Activated T-helper 1 cell treated with anti-CD3 and anti-CD28 coated beads, Interleukin-12 subunit alpha, Interleukin-12 subunit beta, Interleukin-2, Interleukin-4 antibody, amounts not matched to agents 30 ng/mL and 10 ng/mL and 1 ng/mL, durations not matched to agents 14 hours and 24 hours and 36 hours (primary cell): ENCODE measurements at regions of chr20 and their contacts with region 1.

Region 1: DNA sequence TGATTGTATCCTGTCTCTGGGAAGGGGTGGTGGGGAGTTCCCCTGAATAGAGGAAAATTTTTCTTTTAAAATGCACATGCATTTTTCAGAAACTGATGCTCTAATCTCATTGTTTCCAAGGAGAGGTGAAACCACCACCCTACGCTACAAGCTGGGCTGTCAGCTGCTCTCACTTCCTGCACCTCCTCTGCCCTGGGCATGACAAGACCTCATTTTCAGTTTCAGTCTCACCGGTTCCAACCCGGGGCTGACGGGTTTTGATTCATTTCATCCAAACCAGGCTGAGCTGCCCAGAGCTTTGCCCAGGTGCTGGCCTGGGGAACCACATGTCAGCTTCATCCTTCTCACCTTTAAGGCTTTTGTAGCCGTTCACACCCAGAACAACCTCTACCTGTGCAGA is 99.7 kb downstream of the EYA2 start:
- DNase-seq: peak; percentile 74
- H3K4me3 Mint-ChIP-seq: peak overlapping the region; percentile 64
- H3K27ac Mint-ChIP-seq: peak overlapping the region; percentile 90
- H3K4me1 Mint-ChIP-seq: peaks cover 80% of the 10 kb centered on the region
- H3K27me3 Mint-ChIP-seq: peaks cover 6% of the 10 kb centered on the region

Region 2: DNA sequence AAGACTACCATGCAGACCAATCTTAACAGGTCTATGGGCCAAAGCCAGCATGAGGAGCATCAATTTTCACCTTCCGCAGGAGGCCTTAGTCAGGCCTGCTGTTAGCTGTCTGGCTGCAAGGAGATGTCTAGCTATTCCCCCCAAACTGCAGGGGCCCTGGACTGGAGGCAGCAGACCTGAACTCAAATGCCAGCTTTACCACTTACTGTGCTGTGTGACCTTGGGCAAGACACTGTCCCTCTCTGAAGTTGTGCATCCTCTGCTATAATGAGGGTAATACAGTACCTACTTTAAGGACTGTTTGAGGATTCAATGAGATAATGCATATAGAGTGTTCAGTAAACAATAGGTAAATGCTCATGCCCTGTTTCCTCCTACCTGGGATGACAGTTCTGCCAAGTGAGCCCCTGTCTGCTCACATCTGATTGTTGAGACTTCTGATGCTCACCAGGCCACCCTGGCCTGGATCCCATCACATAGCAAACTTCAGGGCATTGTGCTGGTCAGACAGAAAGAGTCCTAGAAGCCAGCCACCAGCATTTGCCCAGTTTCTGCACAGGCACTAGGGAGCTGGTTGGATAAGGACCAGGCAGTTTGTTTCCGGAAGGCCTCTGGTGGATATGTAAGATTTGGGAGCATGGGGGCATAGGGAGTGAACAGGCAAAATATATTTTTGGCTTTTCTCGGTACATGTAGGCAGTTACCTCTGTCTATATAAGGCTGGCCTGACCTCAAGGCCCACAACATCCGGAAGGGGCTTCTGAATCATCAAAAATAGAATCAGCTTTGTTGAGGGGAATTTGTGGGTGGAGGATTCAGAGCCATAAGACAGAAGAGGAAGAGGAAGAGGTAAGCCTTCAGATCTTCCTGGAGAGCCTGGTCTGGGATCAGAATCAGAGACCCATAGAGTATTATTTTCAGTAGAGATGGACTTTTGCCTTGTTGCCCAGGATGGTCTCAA is 441.6 kb before region 1 on chr20:
- intact Hi-C with region 1: loop called (anchors 5 kb)
- DNase-seq: peak; percentile 61
- H3K4me3 Mint-ChIP-seq: peak overlapping the region; percentile 35
- H3K27ac Mint-ChIP-seq: peak overlapping the region; percentile 91
- H3K4me1 Mint-ChIP-seq: peaks cover 68% of the 10 kb centered on the region
- H3K27me3 Mint-ChIP-seq: no peaks in the 10 kb centered on the region

Region 3: GRCh38 chr20:46970923-46971616 is 23.3 kb before region 1 on chr20:
- intact Hi-C with region 1: loop called (anchors 1 kb)
- DNase-seq: no peak
- H3K4me3 Mint-ChIP-seq: no peak overlapping the region
- H3K27ac Mint-ChIP-seq: no peak overlapping the region
- H3K4me1 Mint-ChIP-seq: peaks cover 17% of the 10 kb centered on the region
- H3K27me3 Mint-ChIP-seq: peaks cover 25% of the 10 kb centered on the region

Region 4: DNA sequence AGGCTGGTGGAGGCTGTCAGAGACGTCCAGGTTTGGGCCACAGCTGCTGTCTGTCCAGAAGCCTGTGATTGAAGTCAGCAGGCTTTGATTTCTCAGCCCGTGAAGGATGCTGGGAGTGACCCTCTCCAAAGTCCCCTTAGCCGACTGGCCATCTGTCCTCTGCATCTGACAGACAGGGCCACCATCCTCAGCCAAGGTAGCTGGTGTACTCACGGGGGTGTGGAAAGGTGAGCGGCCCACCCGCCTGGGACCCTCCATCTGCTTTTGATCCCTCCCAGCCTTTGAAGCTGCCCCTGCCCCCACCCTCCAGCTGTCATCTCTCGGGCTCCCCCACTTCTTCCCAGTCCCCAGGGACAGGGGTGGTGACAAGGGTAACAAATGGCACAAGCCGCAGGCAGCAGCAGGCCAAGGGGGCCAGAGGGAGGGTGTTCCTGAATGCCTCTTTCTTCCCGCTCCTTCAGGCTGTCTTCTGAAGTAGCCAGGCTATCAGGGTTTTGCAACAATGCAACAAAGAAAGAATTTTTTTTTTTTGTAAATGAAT is 15.3 kb before region 1 on chr20:
- intact Hi-C with region 1: loop called (anchors 2 kb)
- DNase-seq: no peak
- H3K4me3 Mint-ChIP-seq: no peak overlapping the region
- H3K27ac Mint-ChIP-seq: no peak overlapping the region
- H3K4me1 Mint-ChIP-seq: peaks cover 22% of the 10 kb centered on the region
- H3K27me3 Mint-ChIP-seq: peaks cover 48% of the 10 kb centered on the region

Region 5: DNA sequence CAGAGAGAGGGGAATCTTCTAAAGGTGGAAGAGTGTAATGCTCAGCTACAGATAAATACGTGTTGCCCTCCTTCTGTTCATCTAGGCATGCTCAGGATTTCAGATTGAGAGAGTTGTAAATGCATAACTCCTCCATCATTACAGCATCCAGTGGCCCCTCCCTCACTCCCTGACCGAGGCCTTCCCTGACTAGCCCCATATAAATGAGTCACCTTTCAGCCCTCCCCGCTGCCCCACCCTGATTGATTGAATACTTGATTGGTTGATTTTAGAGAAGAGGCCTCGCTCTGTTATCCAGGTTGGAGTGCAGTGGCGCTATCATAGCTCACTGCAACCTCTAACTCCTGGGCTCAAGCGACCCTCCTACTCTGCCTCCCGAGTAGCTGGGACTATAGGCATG is 94.0 kb after region 1 on chr20:
- intact Hi-C with region 1: no loop called
- DNase-seq: no peak
- H3K4me3 Mint-ChIP-seq: no peak overlapping the region
- H3K27ac Mint-ChIP-seq: no peak overlapping the region
- H3K4me1 Mint-ChIP-seq: no peaks in the 10 kb centered on the region
- H3K27me3 Mint-ChIP-seq: peaks cover 2% of the 10 kb centered on the region

Region 6: DNA sequence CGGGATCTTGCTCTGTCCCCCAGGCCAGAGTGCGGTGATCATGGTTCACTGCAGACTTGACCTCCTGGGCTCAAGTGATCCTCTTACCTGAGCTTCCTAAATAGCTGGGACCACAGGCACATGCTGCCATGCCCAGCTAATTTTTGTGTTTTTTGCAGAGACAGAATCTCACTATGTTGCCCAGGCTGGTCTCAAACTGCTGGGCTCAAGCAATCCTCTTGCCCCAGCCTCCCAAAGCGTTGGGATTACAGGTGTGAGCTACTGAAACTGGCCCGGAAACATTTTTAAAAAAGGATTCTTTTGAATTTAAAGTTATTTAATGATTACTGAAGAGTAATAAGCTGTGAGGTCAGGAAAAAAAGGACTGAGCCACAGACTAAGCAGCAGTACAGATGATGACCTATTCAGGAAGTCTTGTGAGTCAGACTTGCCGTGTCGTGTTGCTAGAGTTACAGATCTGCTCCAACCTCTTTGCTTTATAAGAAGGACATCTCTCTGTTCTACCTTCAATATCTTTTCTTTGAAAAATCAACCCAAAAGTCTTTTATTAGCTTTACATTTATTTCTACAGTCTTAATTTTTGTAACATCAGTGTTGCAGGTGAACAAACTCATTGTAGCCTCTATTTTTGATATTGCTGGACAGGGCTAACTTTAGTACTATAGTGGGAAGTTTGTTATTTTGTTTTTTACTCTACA is 616.1 kb after region 1 on chr20:
- intact Hi-C with region 1: loop called (anchors 10 kb)
- DNase-seq: peak; percentile 60
- H3K4me3 Mint-ChIP-seq: peak overlapping the region; percentile 77
- H3K27ac Mint-ChIP-seq: peak overlapping the region; percentile 97
- H3K4me1 Mint-ChIP-seq: peaks cover 84% of the 10 kb centered on the region
- H3K27me3 Mint-ChIP-seq: no peaks in the 10 kb centered on the region